Prostate gland (tissue), 2 donors: ENCODE measurements at regions of chr2 and their contacts with region 1.

Region 1: GRCh38 chr2:56444339-56444738 is 260.5 kb downstream of the CCDC85A start:
- DNase-seq: no peak
- H3K4me3 ChIP-seq: no peak overlapping the region
- H3K27ac ChIP-seq: no peak overlapping the region
- H3K4me1 ChIP-seq: no peaks in the 10 kb centered on the region
- H3K27me3 ChIP-seq: no peaks in the 10 kb centered on the region
- CTCF ChIP-seq: no peak
- POLR2A ChIP-seq: no peak

Region 2: GRCh38 chr2:56369316-56369715 is 75.0 kb before region 1 on chr2:
- intact Hi-C with region 1: no loop called
- DNase-seq: no peak
- H3K4me3 ChIP-seq: no peak overlapping the region
- H3K27ac ChIP-seq: no peak overlapping the region
- H3K4me1 ChIP-seq: no peaks in the 10 kb centered on the region
- H3K27me3 ChIP-seq: no peaks in the 10 kb centered on the region
- CTCF ChIP-seq: no peak
- POLR2A ChIP-seq: no peak

Region 3: GRCh38 chr2:56390644-56391043 is 53.7 kb before region 1 on chr2:
- intact Hi-C with region 1: loop called (anchors 2 kb)
- DNase-seq: no peak
- H3K4me3 ChIP-seq: no peak overlapping the region
- H3K27ac ChIP-seq: no peak overlapping the region
- H3K4me1 ChIP-seq: no peaks in the 10 kb centered on the region
- H3K27me3 ChIP-seq: no peaks in the 10 kb centered on the region
- CTCF ChIP-seq: no peak
- POLR2A ChIP-seq: no peak